ENCODE measurements at regions of chr4 and their contacts with region 1.

Region 1: GRCh38 chr4:48779998-48780742 is at the start of gene FRYL:
- DNase-seq: peak; percentile 100
- H3K4me3 ChIP-seq: peak within 1 kb of the TSS; percentile 67 to 97 (median 88)
- H3K27ac ChIP-seq: peak within 1 kb of the TSS; percentile 96 to 99 (median 98)
- H3K4me1 ChIP-seq: peaks cover 17 to 42% (median 32%) of the 10 kb centered on the region in 4 donors
- H3K27me3 ChIP-seq: no peaks in the 10 kb centered on the region
- CTCF ChIP-seq: no peak
- EP300 ChIP-seq: no peak
- POLR2A ChIP-seq: peak; percentile 77
- total RNA-seq, gene FRYL: 477 to 645 (median 545) TPM

Region 2: GRCh38 chr4:48340965-48341775 is 439.0 kb before region 1 on chr4 and contains the start of gene SLAIN2:
- in situ Hi-C with region 1: loop called in 2 of 4 experiments (anchors 25 kb)
- intact Hi-C with region 1: no loop called
- DNase-seq: peak; percentile 100
- H3K4me3 ChIP-seq: peak within 1 kb of the TSS; percentile 80 to 97 (median 94)
- H3K27ac ChIP-seq: peak within 1 kb of the TSS; percentile 98 to 99 (median 98)
- H3K4me1 ChIP-seq: peaks cover 9 to 63% (median 36%) of the 10 kb centered on the region in 4 donors
- H3K27me3 ChIP-seq: no peaks in the 10 kb centered on the region
- CTCF ChIP-seq: peak; percentile 30 to 68 (median 46)
- EP300 ChIP-seq: no peak
- POLR2A ChIP-seq: peak; percentile 92
- total RNA-seq, gene SLAIN2: 28.4 to 355 (median 55.8) TPM

Region 3: DNA sequence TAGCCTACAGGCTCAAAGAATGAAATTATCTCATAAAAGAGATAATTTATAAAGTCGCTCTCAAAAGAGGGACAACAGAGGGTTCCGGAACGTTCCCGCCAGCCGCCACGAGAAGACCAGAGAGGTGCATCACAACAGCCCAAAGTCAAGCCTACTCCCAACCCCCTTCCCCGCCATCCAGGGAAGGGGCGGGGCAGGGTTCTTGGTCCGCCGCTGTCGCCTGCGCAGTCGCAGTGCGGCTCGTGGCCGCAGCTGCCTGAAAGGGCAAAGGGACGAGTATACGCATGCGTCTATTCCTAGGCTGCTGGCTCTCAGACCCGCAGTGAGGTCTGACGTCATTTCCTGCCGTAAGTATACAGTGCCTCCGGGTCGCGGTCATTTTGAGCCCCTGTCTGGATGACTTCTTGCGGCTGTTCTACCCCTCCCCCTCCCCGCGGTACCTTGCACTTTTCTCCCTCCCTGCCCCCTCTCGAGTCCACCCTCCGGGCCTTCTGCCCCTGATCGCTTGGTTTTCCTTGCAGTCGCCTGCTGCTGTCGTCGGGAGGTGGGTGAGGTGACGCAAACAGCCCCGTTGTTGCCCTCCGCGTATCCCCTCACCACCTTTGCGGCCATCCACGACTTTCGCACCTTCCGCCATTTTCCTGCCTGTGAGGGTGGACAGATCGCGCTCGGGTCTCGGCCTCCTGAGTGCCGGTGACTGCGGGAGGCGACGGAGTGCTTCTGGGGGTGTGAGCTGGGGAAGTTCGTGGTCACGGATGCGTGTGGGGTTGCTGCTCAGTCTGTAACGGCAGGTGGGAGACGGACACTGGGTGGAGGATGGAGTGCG is 50.7 kb after region 1 on chr4 and contains the start of gene OCIAD1:
- in situ Hi-C with region 1: loop called in 1 of 4 experiments (anchors 10 kb)
- intact Hi-C with region 1: loop called (anchors 2 kb)
- DNase-seq: peak; percentile 98
- H3K4me3 ChIP-seq: peak within 1 kb of the TSS; percentile 64 to 87 (median 75)
- H3K27ac ChIP-seq: peak within 1 kb of the TSS; percentile 90 to 96 (median 93)
- H3K4me1 ChIP-seq: peaks cover 9 to 17% (median 15%) of the 10 kb centered on the region in 4 donors
- H3K27me3 ChIP-seq: no peaks in the 10 kb centered on the region
- CTCF ChIP-seq: no peak
- EP300 ChIP-seq: no peak
- POLR2A ChIP-seq: peak; percentile 40
- total RNA-seq, gene OCIAD1: 104 to 264 (median 115) TPM

Region 4: GRCh38 chr4:48963042-48963679 is 183.0 kb after region 1 on chr4:
- in situ Hi-C with region 1: loop called in 1 of 4 experiments (anchors 25 kb)
- intact Hi-C with region 1: no loop called
- DNase-seq: peak; percentile 78
- H3K4me3 ChIP-seq: no peak overlapping the region
- H3K27ac ChIP-seq: no peak overlapping the region
- H3K4me1 ChIP-seq: no peaks in the 10 kb centered on the region
- H3K27me3 ChIP-seq: no peaks in the 10 kb centered on the region
- CTCF ChIP-seq: peak; percentile 92 to 97 (median 95)
- EP300 ChIP-seq: no peak
- POLR2A ChIP-seq: no peak

Region 5: GRCh38 chr4:49044270-49044669 is 264.1 kb after region 1 on chr4:
- in situ Hi-C with region 1: no loop called
- intact Hi-C with region 1: no loop called
- DNase-seq: no peak
- H3K4me3 ChIP-seq: no peak overlapping the region
- H3K27ac ChIP-seq: no peak overlapping the region
- H3K4me1 ChIP-seq: no peaks in the 10 kb centered on the region
- H3K27me3 ChIP-seq: no peaks in the 10 kb centered on the region
- CTCF ChIP-seq: no peak
- EP300 ChIP-seq: no peak
- POLR2A ChIP-seq: no peak

Measured in transverse colon (tissue), 4 donors.